ENCODE measurements at regions of chr1 and their contacts with region 1.

Region 1: GRCh38 chr1:197614916-197615692 is 160.2 kb downstream of the DENND1B start:
- DNase-seq: no peak
- ATAC-seq: peak; percentile 71 to 90 (median 80)
- H3K4me3 ChIP-seq: no peak overlapping the region
- H3K27ac ChIP-seq: no peak overlapping the region
- H3K4me1 ChIP-seq: peaks cover 16% of the 10 kb centered on the region
- H3K27me3 ChIP-seq: no peaks in the 10 kb centered on the region
- CTCF ChIP-seq: peak; percentile 64

Region 2: DNA sequence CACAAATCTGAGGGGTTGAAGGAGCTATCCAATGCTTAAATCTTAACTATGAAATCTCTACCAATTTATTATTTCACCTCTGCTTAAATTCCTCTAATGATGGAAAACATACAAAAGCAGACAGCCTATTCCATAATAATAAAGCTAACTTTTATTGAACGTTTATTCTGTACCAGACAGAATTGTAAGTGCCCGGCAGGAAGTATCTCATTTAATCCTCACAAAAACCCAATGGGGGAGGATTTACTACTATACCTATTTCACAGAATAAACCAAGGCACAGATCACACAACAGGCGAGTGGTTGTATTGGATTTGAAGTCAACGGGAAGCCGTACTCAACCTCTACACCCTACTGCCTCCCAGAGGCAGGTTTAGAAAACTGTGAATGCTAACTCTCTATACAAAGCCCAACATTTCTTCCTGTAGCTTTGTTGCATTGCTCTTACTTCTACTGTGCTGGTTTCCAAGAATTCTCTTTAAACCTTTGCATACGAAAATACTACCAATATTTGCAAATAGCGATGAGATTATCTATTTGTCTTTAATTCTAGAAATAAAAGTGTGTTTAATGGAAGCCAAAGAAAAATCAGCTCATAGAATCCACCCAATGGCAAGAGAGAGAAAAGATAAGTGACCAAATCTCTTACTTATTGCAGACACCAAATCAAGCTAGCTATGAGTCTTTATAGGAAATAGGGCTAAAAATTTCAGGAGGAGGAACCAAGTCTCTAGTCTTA is 253.8 kb after region 1 on chr1:
- intact Hi-C with region 1: loop called (anchors 5 kb)
- DNase-seq: no peak
- ATAC-seq: peak; percentile 60 to 92 (median 82)
- H3K4me3 ChIP-seq: no peak overlapping the region
- H3K27ac ChIP-seq: no peak overlapping the region
- H3K4me1 ChIP-seq: no peaks in the 10 kb centered on the region
- H3K27me3 ChIP-seq: no peaks in the 10 kb centered on the region
- CTCF ChIP-seq: peak; percentile 65

Region 3: DNA sequence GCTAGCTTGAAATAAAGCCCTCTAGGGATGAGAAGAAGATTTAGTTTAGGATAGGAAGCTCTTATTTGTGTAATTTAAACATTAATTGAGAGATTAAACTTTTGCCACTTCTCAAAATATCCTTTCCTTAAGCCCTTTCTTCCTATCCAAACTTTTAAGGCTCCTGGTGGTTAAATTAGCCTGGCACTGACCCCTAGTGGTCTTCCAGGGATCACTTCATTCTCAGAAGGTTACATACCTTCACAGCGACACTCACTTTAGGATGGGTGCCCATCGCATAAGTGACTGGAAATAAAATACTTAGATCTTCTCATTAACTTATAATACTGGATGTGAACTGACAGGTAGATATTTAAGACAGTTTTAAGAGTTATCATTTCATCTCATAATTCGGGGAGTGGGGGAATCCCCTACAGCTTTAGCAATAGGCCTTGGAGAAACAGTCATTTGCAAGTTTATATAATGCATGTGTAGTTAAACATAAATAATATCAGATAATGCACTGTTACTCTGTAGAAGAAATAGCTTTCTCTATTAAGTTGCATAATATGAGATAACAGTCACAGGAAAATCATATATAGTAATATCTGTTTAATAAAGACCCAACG is 309.5 kb after region 1 on chr1:
- intact Hi-C with region 1: loop called in 1 of 2 experiments (anchors 5 kb)
- DNase-seq: no peak
- ATAC-seq: peak in 2 of 4 donors; percentile 70 to 76
- H3K4me3 ChIP-seq: no peak overlapping the region
- H3K27ac ChIP-seq: no peak overlapping the region
- H3K4me1 ChIP-seq: peaks cover 2% of the 10 kb centered on the region
- H3K27me3 ChIP-seq: peaks cover 9 to 56% (median 26%) of the 10 kb centered on the region in 3 donors
- CTCF ChIP-seq: peak; percentile 71

Region 4: DNA sequence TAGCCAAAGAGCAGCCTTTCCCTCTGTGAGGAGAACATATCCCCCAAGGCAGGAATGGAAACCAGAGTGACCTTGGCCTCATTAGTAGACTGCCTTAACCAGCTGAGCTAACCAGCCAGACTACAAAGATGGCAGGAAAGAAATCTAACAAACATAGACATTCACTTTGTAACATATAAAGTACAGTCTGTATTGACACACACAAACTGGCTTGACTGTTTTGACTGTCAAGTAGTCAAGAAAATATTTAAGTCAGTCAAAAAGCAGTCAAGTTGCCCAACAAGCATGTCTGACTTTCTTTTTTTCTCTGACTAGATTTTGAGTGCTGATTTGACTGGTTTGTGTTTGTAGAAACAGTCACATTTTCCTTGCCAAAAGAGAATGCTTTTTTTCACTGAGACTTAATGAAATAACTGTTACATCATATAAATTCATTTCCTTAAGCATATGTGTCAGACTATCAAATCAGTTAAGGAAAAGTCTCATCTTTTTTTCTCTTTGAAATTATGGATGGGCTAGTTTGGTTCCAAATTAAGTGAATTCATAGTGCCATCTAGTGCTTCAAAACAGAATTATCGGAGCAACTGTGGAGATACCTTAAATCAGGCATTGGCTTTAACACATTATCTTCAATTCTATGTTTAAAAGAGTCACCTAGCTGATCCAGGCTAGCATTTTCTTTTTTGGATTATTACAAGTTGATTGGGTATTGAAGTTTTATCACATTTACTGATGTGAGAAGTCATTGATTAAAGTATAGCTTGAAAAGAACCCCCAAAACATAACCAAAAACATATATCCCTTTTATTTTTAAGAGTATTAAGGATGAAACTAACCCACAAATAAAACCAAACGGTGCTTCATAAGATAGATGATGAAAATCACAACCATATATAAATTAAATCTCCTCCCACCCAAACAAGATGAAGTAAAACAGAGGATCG is 850.4 kb after region 1 on chr1:
- intact Hi-C with region 1: loop called in 1 of 2 experiments (anchors 10 kb)
- DNase-seq: no peak
- ATAC-seq: peak in 1 of 4 donors; percentile 69
- H3K4me3 ChIP-seq: no peak overlapping the region
- H3K27ac ChIP-seq: no peak overlapping the region
- H3K4me1 ChIP-seq: no peaks in the 10 kb centered on the region
- H3K27me3 ChIP-seq: no peaks in the 10 kb centered on the region
- CTCF ChIP-seq: peak; percentile 59